ENCODE measurements at regions of chr17 and their contacts with region 1.

Region 1: GRCh38 chr17:15456972-15457722 is 10.3 kb downstream of the CDRT4 start:
- DNase-seq: peak; percentile 70 to 85 (median 77)
- H3K4me3 ChIP-seq: peak overlapping the region; percentile 7
- H3K27ac ChIP-seq: peak overlapping the region; percentile 50 to 60
- H3K4me1 ChIP-seq: peaks cover 13% of the 10 kb centered on the region
- H3K27me3 ChIP-seq: no peaks in the 10 kb centered on the region
- CTCF ChIP-seq: peak in 2 of 3 donors; percentile 46 to 52
- EP300 ChIP-seq: no peak
- POLR2A ChIP-seq: no peak

Region 2: GRCh38 chr17:15257258-15257788 is 199.8 kb before region 1 on chr17:
- intact Hi-C with region 1: loop called in 2 of 4 experiments (anchors 2 to 5 kb)
- DNase-seq: peak; percentile 60 to 83 (median 74)
- H3K4me3 ChIP-seq: peak overlapping the region; percentile 30
- H3K27ac ChIP-seq: peak overlapping the region in 1 of 2 donors; percentile 5
- H3K4me1 ChIP-seq: peaks cover 19% of the 10 kb centered on the region
- H3K27me3 ChIP-seq: no peaks in the 10 kb centered on the region
- CTCF ChIP-seq: peak; percentile 65 to 82 (median 74)
- EP300 ChIP-seq: no peak
- POLR2A ChIP-seq: no peak

Region 3: GRCh38 chr17:15262291-15263205 is 194.6 kb before region 1 on chr17:
- intact Hi-C with region 1: loop called in 2 of 4 experiments (anchors 2 to 5 kb)
- DNase-seq: peak; percentile 86 to 91 (median 90)
- H3K4me3 ChIP-seq: peak overlapping the region; percentile 71
- H3K27ac ChIP-seq: peak overlapping the region; percentile 93 to 94
- H3K4me1 ChIP-seq: peaks cover 15% of the 10 kb centered on the region
- H3K27me3 ChIP-seq: no peaks in the 10 kb centered on the region
- CTCF ChIP-seq: peak in 1 of 3 donors; percentile 41
- EP300 ChIP-seq: peak; percentile 25
- POLR2A ChIP-seq: peak; percentile 82

Region 4: DNA sequence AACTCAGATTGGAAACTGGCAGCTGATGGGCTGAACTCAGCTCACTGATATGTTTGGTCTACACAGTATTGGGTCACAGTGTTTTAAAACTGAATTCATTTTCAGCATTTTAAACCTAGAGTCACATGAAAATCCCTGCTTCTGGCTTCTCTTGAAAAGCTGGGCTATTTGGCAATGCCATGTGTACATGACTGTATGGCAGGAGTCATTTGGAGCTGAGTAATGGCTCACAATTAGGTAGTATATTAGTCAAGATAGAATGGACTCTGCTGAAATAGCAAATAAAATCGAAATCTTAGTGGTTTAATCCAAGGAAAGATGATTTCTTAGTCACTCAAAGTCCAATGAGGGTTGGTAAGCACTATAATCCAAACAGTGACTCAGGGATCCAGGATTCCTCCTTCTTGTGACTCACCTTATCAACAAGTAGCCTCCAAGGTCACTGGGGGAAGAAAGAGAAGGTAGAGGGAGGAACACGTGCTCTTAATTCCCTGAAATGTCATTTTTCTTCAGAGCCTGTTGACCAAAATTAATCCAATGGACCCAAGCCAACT is 178.1 kb before region 1 on chr17:
- intact Hi-C with region 1: no loop called
- DNase-seq: no peak
- H3K4me3 ChIP-seq: no peak overlapping the region
- H3K27ac ChIP-seq: no peak overlapping the region
- H3K4me1 ChIP-seq: no peaks in the 10 kb centered on the region
- H3K27me3 ChIP-seq: no peaks in the 10 kb centered on the region
- CTCF ChIP-seq: no peak
- EP300 ChIP-seq: no peak
- POLR2A ChIP-seq: no peak

Region 5: DNA sequence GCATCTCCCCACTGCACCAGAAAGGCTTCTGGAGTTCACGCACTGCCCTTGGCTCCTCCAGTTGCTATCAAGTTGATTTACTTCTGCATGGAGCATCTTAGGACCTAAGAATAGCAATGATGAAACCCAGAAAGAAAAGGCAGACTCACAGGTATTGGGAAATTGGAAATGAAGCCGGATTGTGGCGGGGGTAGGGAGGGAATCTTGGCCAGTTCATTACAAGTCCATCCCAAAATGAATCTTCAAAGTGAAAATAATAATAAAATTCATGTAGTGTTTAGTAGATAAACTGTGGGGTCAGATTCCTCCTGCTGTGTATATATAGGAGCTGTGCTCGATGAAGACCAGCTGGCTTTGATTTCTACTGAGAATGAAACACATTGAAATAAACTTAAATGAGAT is 149.4 kb before region 1 on chr17:
- intact Hi-C with region 1: loop called in 1 of 4 experiments (anchors 5 kb)
- DNase-seq: peak in 2 of 5 donors; percentile 41 to 51
- H3K4me3 ChIP-seq: no peak overlapping the region
- H3K27ac ChIP-seq: no peak overlapping the region
- H3K4me1 ChIP-seq: peaks cover 2% of the 10 kb centered on the region
- H3K27me3 ChIP-seq: no peaks in the 10 kb centered on the region
- CTCF ChIP-seq: no peak
- EP300 ChIP-seq: no peak
- POLR2A ChIP-seq: no peak

Region 6: GRCh38 chr17:15502369-15503112 is 45.4 kb after region 1 on chr17:
- intact Hi-C with region 1: loop called in 1 of 4 experiments (anchors 5 kb)
- DNase-seq: peak; percentile 93 to 95 (median 95)
- H3K4me3 ChIP-seq: peak overlapping the region; percentile 24
- H3K27ac ChIP-seq: peak overlapping the region; percentile 31 to 68
- H3K4me1 ChIP-seq: peaks cover 3% of the 10 kb centered on the region
- H3K27me3 ChIP-seq: no peaks in the 10 kb centered on the region
- CTCF ChIP-seq: peak; percentile 86 to 91 (median 89)
- EP300 ChIP-seq: no peak
- POLR2A ChIP-seq: no peak

Measured in ovary (tissue), 10 donors.